Activated CD4-positive, alpha-beta T cell treated with anti-CD3 and anti-CD28 coated beads, Interleukin-2, amount 10 ng/mL, durations not matched to agents 24 days and 14 days (primary cell): ENCODE measurements at regions of chr6 and their contacts with region 1.

Region 1: DNA sequence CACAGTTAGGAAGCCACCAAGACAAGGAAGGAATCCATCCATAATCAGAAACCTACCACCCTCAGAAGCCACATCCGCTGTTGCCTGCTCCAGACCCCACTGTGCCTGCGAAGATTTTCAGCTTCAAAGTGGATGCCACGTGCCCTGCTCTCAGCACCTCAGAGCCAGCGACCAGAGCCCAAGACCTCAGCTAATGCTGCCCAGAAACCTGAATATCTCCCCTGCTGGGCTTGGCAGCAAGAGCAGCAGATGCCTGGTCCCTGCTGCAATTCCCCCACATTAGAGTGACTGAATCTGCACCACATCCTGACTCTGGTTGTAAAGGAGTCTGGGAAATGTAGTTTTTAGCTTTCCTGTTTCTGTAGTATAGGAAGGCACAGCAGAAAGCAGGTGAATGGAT is 10.7 kb upstream of the ULBP3 start:
- DNase-seq: peak; percentile 74
- H3K4me3 Mint-ChIP-seq: peak overlapping the region; percentile 10
- H3K27ac Mint-ChIP-seq: no peak overlapping the region
- H3K4me1 Mint-ChIP-seq: peaks cover 13% of the 10 kb centered on the region
- H3K27me3 Mint-ChIP-seq: peaks cover 36% of the 10 kb centered on the region

Region 2: DNA sequence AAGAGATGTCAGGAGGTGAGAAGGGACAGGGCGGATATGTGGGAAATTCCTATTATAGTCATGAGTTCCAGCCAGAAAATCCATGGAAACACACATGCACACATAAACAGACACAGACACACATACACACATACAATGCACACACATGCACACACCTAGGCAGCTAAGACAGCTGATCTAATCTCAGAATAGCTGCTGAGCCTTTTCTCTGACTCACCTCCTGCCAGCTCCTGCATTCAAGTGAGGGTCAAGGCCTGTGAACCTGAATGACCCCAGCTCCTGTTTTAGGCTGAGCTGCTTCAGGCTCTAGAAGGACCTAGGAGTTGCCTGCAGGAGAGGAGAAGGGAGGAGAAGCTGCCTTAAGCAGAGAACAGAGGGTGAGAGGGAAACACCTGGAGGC is 32.7 kb before region 1 on chr6:
- intact Hi-C with region 1: no loop called
- DNase-seq: no peak
- H3K4me3 Mint-ChIP-seq: no peak overlapping the region
- H3K27ac Mint-ChIP-seq: no peak overlapping the region
- H3K4me1 Mint-ChIP-seq: no peaks in the 10 kb centered on the region
- H3K27me3 Mint-ChIP-seq: peaks cover 30% of the 10 kb centered on the region

Region 3: GRCh38 chr6:150091476-150091875 is 11.9 kb after region 1 on chr6:
- intact Hi-C with region 1: no loop called
- DNase-seq: no peak
- H3K4me3 Mint-ChIP-seq: no peak overlapping the region
- H3K27ac Mint-ChIP-seq: no peak overlapping the region
- H3K4me1 Mint-ChIP-seq: no peaks in the 10 kb centered on the region
- H3K27me3 Mint-ChIP-seq: peaks cover 11% of the 10 kb centered on the region

Region 4: DNA sequence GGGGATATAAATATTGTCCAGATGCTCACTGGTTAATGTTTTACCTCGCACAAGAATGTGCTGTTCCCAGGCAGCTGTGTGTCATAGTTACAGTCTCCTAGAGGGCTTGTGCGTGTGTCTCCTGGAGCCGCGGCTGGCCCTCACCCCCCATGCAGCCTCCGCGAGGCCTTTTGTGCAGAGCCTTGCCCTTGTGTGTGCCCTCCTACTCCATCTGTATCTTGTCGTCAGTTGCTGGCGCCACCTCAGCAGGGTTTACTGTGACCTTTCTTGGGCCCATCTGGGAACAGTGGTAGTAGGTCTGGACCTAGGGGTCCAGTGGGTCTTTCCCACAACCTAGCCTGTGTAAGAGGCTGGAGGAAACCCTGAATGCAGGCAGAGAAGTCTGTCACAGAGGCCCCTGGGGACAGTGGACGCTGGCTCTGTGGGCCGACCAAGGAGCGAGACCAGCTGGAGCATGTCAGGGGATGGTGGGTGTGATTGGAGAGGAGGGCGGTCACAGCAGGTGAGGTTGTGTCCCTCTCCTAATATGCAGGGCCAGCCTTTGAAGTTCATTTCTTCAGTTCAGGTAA is 98.4 kb after region 1 on chr6:
- intact Hi-C with region 1: no loop called
- DNase-seq: no peak
- H3K4me3 Mint-ChIP-seq: no peak overlapping the region
- H3K27ac Mint-ChIP-seq: no peak overlapping the region
- H3K4me1 Mint-ChIP-seq: peaks cover 4% of the 10 kb centered on the region
- H3K27me3 Mint-ChIP-seq: peaks cover 28% of the 10 kb centered on the region

Region 5: GRCh38 chr6:150238336-150238741 is 158.7 kb after region 1 on chr6:
- intact Hi-C with region 1: loop called (anchors 2 kb)
- DNase-seq: no peak
- H3K4me3 Mint-ChIP-seq: no peak overlapping the region
- H3K27ac Mint-ChIP-seq: no peak overlapping the region
- H3K4me1 Mint-ChIP-seq: peaks cover 14% of the 10 kb centered on the region
- H3K27me3 Mint-ChIP-seq: peaks cover 12% of the 10 kb centered on the region

Region 6: DNA sequence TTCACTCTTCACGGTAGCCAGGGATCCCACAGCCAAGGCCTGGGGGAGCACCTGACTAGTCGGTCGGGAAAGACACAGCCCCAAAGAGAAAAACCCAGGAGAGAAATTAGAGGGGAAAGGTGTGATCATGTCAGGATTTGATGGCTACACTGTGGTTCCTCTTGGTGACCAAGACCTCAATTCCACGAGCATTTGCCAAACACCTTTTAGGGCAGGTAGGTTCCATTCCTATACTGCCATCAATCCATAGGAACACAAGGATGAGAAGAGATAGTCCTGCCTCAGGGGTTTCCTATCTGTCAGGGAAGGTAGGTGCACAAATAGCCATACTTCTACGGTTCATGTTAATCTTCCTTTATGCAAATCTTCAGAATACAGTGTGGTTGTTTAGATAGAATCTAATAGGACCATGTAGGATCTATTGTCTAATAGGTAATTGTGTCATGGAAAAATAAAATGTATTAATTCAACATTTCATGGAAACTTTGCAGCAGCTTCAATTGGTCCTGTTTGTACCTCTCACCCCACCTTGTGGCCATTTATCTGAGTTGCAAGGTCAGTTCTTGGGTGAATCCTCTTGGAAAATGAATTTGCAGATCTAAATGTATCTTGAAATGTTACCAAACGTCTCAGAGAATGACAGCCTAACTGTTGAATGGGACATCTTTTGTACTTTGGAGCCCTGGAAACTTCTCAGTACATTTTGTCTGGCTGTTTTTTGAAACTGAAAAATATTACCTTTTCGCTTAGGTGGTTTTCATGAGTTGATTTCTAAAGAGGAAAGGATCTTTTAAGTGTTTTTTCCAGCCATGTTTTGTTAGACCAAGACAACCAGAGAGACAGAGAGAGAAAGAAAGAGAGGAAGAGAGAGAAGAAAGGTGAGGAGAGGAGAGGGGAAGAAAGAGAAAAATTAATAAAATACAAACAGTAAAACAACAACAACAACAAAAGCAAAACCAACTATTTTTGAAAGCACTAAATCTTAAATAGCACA is 255.5 kb after region 1 on chr6:
- intact Hi-C with region 1: loop called (anchors 1 kb)
- DNase-seq: peak; percentile 75
- H3K4me3 Mint-ChIP-seq: no peak overlapping the region
- H3K27ac Mint-ChIP-seq: no peak overlapping the region
- H3K4me1 Mint-ChIP-seq: no peaks in the 10 kb centered on the region
- H3K27me3 Mint-ChIP-seq: peaks cover 9% of the 10 kb centered on the region

Region 7: GRCh38 chr6:150395398-150396009 is 315.9 kb after region 1 on chr6:
- intact Hi-C with region 1: loop called (anchors 1 kb)
- DNase-seq: peak; percentile 77
- H3K4me3 Mint-ChIP-seq: no peak overlapping the region
- H3K27ac Mint-ChIP-seq: no peak overlapping the region
- H3K4me1 Mint-ChIP-seq: no peaks in the 10 kb centered on the region
- H3K27me3 Mint-ChIP-seq: peaks cover 8% of the 10 kb centered on the region